ENCODE measurements at regions of chr11 and their contacts with region 1.

Region 1: DNA sequence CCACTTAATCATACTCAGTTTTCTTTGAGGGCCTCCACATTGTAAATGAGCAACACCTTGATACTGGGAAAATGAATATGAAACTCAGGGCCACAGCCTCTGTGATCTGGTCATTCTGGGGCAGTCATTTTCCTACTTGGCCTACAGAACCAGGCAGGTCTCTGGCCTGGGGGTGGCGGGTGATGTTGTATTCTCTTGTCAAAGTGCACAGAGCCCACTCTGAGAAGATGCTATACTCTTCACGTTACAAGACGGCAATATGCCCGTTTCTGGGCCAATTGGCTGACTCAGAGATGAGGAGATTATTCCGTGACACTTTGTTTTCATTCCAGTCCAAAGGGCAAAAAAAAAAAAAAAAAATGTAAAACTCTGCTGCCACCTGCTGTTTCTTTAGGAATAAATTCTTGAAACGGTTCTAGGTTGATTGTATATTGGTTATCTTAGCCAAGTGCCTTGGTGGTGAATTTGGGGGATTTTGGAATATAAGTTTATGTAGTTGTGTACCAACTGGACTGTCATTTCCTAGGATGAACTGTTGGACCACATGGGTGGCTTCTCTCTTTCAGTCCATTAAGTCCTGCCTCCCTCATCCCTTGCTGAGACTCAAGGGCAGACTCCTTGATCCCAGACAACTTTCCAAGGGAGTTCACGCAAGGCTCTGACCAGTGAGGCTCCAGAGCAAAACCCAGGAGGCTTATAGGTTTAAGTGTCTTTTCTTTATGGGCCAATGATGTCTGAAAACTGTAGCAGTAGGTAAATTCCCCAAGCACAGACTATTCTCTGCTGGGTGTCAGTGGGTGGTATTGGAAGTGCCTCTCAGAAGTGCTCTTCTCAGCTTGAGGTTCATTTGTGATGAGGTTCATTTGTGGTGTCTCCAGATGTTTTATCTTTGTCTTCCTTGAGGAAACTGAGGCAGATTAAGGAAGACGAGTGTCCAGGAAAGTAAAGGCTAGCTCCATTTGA is 18.2 kb downstream of the ADM start:
- DNase-seq: peak; percentile 56
- H3K4me3 Mint-ChIP-seq: no peak overlapping the region
- H3K27ac Mint-ChIP-seq: peak overlapping the region; percentile 79
- H3K4me1 Mint-ChIP-seq: peaks cover 27% of the 10 kb centered on the region
- H3K27me3 Mint-ChIP-seq: peaks cover 8% of the 10 kb centered on the region
- CTCF ChIP-seq: peak; percentile 57

Region 2: GRCh38 chr11:9626496-9627394 is 696.4 kb before region 1 on chr11:
- CTCF ChIA-PET with region 1: no interaction called
- intact Hi-C with region 1: loop called (anchors 10 kb)
- DNase-seq: no peak
- H3K4me3 Mint-ChIP-seq: no peak overlapping the region
- H3K27ac Mint-ChIP-seq: no peak overlapping the region
- H3K4me1 Mint-ChIP-seq: no peaks in the 10 kb centered on the region
- H3K27me3 Mint-ChIP-seq: peaks cover 16% of the 10 kb centered on the region
- CTCF ChIP-seq: no peak

Region 3: DNA sequence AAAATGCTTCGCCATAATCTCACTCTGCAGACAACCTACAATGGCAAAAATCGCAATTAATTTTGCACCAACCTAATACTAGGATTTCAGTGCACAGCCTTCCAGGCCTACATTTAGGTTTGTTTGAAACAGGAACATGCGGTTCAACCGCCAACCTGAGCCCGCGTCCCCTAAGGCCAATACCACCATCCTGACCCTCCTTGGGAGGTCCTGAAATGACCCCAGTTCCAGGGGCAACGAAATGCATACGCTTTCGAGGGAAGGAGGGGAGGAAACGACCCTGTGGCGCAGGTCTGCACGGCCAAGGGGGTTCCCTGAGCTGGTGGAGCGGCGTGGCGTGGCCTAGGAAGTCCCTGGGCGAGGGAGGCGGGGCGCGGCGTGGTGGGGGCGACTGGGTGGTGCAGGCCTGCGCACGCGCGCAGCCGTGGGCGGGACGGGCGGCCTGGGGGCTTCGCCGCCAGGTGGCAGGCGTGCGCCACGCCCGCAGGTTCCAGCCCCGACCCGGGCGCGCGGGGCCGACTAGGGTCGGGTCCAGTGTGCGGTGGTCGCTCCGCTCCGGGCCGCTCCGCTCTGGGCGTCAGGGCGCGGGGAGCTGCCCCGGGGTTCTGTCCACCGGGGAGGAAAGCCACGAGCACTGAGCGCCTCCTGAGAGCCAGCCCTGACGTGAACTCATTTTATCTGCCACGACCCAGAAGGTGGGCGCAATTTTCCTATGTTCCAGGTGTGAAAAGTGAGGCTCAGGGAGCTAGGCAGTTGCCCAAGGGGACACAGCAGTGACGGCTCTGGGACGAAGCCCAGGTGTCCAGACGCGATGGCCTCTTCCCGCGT is 565.1 kb before region 1 on chr11:
- CTCF ChIA-PET with region 1: no interaction called
- intact Hi-C with region 1: loop called (anchors 2 kb)
- DNase-seq: peak; percentile 87
- H3K4me3 Mint-ChIP-seq: peak overlapping the region; percentile 81
- H3K27ac Mint-ChIP-seq: peak overlapping the region; percentile 95
- H3K4me1 Mint-ChIP-seq: peaks cover 21% of the 10 kb centered on the region
- H3K27me3 Mint-ChIP-seq: no peaks in the 10 kb centered on the region
- CTCF ChIP-seq: peak; percentile 88

Region 4: DNA sequence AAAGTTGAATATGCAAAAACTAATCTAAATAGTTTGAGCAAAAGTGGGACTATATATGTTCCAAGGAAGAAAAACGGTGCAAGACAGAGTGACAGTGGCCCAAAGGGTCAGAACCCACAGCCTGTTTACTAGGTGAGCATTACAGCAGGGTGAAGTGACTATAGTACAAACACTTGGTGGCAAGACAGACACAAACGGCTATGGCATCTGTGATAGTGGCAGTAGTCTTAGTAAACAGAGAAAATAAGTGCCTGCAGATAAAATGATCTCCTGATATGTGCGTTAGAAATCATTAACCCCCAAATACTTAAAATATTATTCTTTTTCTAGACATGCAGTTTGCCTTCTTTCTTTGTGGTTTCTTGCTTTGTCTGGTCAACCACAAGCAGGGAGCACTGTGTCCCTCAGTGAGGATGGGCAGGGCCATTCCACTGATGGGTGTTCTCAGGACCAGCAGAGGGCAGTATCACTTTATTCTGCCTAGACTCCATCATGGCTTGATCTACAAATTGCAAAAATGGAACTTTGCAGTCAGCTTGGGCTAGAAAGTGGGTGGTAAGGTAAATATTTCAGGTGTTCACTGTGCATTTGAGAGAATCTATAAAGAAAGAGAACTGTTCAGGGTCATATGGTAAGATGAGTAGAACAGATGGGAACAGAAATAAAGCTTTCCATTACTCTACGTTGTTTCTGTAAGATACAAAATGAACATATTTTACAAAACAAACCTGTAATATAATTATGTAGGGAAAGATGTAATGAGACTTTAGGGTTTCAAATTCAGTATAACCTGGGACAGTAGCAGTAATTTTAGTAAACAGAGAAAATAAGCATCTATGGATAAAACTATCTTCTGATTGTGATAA is 461.0 kb before region 1 on chr11:
- CTCF ChIA-PET with region 1: no interaction called
- intact Hi-C with region 1: loop called (anchors 5 kb)
- DNase-seq: peak; percentile 61
- H3K4me3 Mint-ChIP-seq: no peak overlapping the region
- H3K27ac Mint-ChIP-seq: no peak overlapping the region
- H3K4me1 Mint-ChIP-seq: peaks cover 8% of the 10 kb centered on the region
- H3K27me3 Mint-ChIP-seq: no peaks in the 10 kb centered on the region
- CTCF ChIP-seq: peak; percentile 68

Region 5: DNA sequence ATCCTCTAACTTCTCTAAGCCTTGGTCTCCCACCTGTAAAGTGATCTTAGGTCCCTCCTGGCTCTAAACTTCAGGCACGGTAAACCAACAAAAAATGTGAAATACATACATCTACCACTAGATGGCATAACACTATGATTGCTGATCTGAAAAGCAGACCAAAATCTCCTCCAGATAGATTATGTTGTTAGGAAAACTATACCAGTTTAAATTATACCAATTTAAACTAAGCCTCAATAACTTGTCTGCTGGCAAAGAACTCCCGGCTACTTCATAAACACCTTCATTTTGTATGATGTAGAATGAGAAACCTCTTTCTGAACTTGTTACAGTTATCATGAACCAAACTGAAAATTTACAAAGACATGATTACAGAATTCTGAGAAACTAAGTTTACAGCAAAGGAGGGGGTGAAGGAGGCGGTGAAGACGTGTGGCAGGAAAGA is 115.0 kb before region 1 on chr11:
- CTCF ChIA-PET with region 1: no interaction called
- intact Hi-C with region 1: loop called (anchors 5 kb)
- DNase-seq: peak; percentile 3
- H3K4me3 Mint-ChIP-seq: no peak overlapping the region
- H3K27ac Mint-ChIP-seq: no peak overlapping the region
- H3K4me1 Mint-ChIP-seq: no peaks in the 10 kb centered on the region
- H3K27me3 Mint-ChIP-seq: no peaks in the 10 kb centered on the region
- CTCF ChIP-seq: peak; percentile 38

Region 6: DNA sequence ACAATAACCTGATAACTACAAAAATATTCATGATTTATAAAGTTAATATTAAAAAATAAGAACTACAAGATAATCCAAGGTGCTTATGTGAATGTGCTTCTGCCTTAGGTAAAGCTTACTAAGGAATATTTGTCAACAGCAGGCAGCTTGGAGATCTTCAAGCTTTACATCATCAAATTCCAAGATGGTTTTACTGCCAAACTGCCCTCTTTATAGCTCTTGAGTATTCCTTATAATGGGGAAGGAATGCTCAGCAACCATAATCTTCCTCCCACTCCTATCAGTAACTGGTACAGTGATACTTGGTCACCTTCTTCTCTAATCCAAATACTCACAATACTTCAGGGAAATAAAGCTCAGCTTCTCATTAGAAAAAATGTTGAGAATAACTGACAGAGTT is 59.2 kb before region 1 on chr11:
- CTCF ChIA-PET with region 1: no interaction called
- intact Hi-C with region 1: no loop called
- DNase-seq: no peak
- H3K4me3 Mint-ChIP-seq: no peak overlapping the region
- H3K27ac Mint-ChIP-seq: no peak overlapping the region
- H3K4me1 Mint-ChIP-seq: no peaks in the 10 kb centered on the region
- H3K27me3 Mint-ChIP-seq: no peaks in the 10 kb centered on the region
- CTCF ChIP-seq: no peak

Region 7: GRCh38 chr11:10735481-10736475 is 412.7 kb after region 1 on chr11:
- CTCF ChIA-PET with region 1: no interaction called
- intact Hi-C with region 1: loop called (anchors 10 kb)
- DNase-seq: peak; percentile 96
- H3K4me3 Mint-ChIP-seq: peak overlapping the region; percentile 26
- H3K27ac Mint-ChIP-seq: peak overlapping the region; percentile 21
- H3K4me1 Mint-ChIP-seq: peaks cover 15% of the 10 kb centered on the region
- H3K27me3 Mint-ChIP-seq: peaks cover 18% of the 10 kb centered on the region
- CTCF ChIP-seq: peak; percentile 94

Measured in Calu3 (cell line).